Activated CD4-positive, alpha-beta memory T cell treated with anti-CD3 and anti-CD28 coated beads for 36 hours (primary cell): ENCODE measurements at regions of chr12 and their contacts with region 1.

Region 1: GRCh38 chr12:810671-811415 is 58.5 kb downstream of the WNK1 start:
- DNase-seq: peak; percentile 86
- H3K4me3 Mint-ChIP-seq: peak overlapping the region; percentile 8
- H3K27ac Mint-ChIP-seq: peak overlapping the region; percentile 15
- H3K4me1 Mint-ChIP-seq: peaks cover 70% of the 10 kb centered on the region
- H3K27me3 Mint-ChIP-seq: no peaks in the 10 kb centered on the region

Region 2: DNA sequence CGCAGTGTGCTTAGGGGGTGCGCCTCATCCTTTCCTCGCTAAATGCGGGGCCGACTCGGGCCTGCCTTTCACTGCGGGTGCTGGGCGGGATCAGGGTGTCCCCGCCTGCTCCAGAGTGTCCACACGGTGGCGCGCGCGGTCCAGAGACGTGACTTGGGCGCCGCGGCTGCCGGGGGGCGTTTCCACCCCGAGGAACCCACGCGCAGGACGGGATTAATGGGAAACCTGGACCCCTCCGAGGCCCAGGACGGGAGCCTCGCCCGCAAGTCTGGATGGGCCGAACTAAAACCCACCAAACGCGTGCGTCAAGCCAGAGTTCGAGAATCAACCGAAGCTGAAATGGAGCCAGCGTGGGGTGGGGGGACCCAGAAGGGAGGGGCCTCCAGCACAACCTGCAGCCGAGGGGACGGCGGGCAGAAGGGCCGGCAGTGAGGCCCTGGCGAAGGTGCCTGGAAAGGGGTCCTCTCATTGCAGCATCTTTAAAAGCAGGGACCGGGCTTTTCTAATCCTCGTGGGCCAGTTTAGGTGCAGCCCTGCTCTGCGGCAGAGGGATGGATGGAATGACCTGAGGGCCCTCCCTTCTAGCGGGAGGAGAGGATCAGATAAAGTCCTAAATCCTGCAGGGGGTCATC is 240.9 kb before region 1 on chr12:
- CTCF ChIA-PET with region 1: interaction called, 103 read pairs
- POLR2A ChIA-PET with region 1: no interaction called
- intact Hi-C with region 1: loop called (anchors 2 kb)
- DNase-seq: peak; percentile 90
- H3K4me3 Mint-ChIP-seq: peak overlapping the region; percentile 79
- H3K27ac Mint-ChIP-seq: no peak overlapping the region
- H3K4me1 Mint-ChIP-seq: peaks cover 48% of the 10 kb centered on the region
- H3K27me3 Mint-ChIP-seq: no peaks in the 10 kb centered on the region

Region 3: GRCh38 chr12:614411-614970 is 196.4 kb before region 1 on chr12:
- CTCF ChIA-PET with region 1: interaction called, 29 read pairs
- POLR2A ChIA-PET with region 1: no interaction called
- intact Hi-C with region 1: loop called (anchors 2 kb)
- DNase-seq: peak; percentile 59
- H3K4me3 Mint-ChIP-seq: no peak overlapping the region
- H3K27ac Mint-ChIP-seq: no peak overlapping the region
- H3K4me1 Mint-ChIP-seq: peaks cover 18% of the 10 kb centered on the region
- H3K27me3 Mint-ChIP-seq: no peaks in the 10 kb centered on the region

Region 4: GRCh38 chr12:761256-761655 is 49.6 kb before region 1 on chr12:
- CTCF ChIA-PET with region 1: interaction called, 43 read pairs
- POLR2A ChIA-PET with region 1: no interaction called
- intact Hi-C with region 1: no loop called
- DNase-seq: no peak
- H3K4me3 Mint-ChIP-seq: no peak overlapping the region
- H3K27ac Mint-ChIP-seq: peak overlapping the region; percentile 26
- H3K4me1 Mint-ChIP-seq: peaks cover 65% of the 10 kb centered on the region
- H3K27me3 Mint-ChIP-seq: no peaks in the 10 kb centered on the region

Region 5: DNA sequence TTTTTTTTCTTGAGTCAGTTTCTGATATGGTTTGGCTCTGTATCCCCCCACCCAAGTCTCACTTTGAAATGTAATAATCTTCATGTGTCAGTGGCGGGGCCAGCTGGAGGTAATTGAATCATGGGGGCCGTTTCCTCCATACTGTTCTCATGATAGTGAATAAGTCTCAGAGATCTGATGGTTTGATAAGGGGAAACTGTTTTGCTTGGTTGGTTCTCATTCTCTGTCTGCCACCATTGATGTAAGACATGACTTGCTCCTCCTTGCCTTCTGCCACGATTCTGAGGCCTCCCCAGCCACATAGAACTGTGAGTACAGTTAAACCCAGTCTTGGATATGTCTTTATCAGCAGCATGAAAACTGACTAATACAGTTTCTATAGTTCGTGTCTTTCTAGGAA is 15.5 kb before region 1 on chr12:
- CTCF ChIA-PET with region 1: interaction called, 26 read pairs
- POLR2A ChIA-PET with region 1: no interaction called
- intact Hi-C with region 1: loop called (anchors 1 kb)
- DNase-seq: peak; percentile 85
- H3K4me3 Mint-ChIP-seq: peak overlapping the region; percentile 35
- H3K27ac Mint-ChIP-seq: peak overlapping the region; percentile 79
- H3K4me1 Mint-ChIP-seq: peaks cover 81% of the 10 kb centered on the region
- H3K27me3 Mint-ChIP-seq: no peaks in the 10 kb centered on the region

Region 6: GRCh38 chr12:1013618-1014489 is 203.0 kb after region 1 on chr12:
- CTCF ChIA-PET with region 1: no interaction called
- POLR2A ChIA-PET with region 1: no interaction called
- intact Hi-C with region 1: no loop called
- DNase-seq: no peak
- H3K4me3 Mint-ChIP-seq: no peak overlapping the region
- H3K27ac Mint-ChIP-seq: no peak overlapping the region
- H3K4me1 Mint-ChIP-seq: peaks cover 2% of the 10 kb centered on the region
- H3K27me3 Mint-ChIP-seq: no peaks in the 10 kb centered on the region

Region 7: DNA sequence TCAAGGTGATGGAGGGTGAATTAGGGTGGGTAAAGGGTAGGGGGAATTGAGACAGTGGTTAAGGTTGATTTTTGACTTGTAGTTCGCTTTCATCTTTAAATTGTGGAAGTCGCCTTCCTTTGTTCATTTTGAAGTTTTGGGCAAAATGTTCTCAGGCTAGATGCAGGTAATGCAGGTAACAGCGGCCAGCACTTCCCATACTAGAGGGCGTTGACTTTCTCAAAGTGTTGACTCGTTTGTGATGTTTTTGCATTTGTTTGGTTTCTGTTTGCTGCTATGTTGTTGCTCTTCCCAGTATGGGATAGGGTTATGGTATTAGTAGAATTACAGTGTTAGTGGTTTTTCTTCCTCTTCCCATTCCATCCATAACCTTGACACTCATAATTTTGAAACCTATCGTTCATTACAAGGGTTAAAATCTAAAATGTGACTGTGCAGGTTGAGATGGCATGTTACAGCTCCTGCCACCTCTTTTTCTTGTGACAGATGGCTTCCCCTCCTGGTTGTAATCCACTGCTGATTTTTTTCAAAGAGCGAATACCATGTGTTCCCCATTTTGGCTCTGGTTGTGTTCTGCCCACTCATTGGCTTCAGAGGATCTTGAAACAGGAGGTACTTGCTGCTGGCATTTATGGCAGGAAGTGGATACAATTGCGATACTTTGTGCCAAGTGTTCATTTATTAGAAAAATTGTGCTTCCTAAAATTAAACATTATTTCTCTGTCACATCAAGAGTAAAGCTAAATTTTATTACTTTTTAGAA is 237.2 kb after region 1 on chr12:
- CTCF ChIA-PET with region 1: no interaction called
- POLR2A ChIA-PET with region 1: no interaction called
- intact Hi-C with region 1: no loop called
- DNase-seq: no peak
- H3K4me3 Mint-ChIP-seq: no peak overlapping the region
- H3K27ac Mint-ChIP-seq: no peak overlapping the region
- H3K4me1 Mint-ChIP-seq: peaks cover 4% of the 10 kb centered on the region
- H3K27me3 Mint-ChIP-seq: no peaks in the 10 kb centered on the region

Region 8: DNA sequence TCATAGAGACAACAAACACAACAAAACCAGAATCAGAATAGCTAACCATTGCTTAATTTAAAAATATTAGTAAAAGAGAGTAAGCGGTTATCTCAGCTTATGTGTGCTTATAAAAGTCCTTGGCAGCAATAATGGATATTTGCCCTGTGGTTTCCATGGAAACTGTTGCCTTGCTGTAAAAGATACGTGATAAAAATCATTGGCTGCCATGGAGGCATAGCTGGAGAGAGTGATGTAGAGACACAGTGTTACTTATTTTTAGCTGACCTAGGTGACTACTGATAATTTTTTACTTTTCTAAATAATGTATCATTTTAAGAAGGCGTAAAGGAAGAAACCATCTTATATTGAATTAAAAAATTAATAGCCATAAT is 273.0 kb after region 1 on chr12:
- CTCF ChIA-PET with region 1: no interaction called
- POLR2A ChIA-PET with region 1: no interaction called
- intact Hi-C with region 1: no loop called
- DNase-seq: no peak
- H3K4me3 Mint-ChIP-seq: no peak overlapping the region
- H3K27ac Mint-ChIP-seq: no peak overlapping the region
- H3K4me1 Mint-ChIP-seq: peaks cover 16% of the 10 kb centered on the region
- H3K27me3 Mint-ChIP-seq: no peaks in the 10 kb centered on the region

Region 9: DNA sequence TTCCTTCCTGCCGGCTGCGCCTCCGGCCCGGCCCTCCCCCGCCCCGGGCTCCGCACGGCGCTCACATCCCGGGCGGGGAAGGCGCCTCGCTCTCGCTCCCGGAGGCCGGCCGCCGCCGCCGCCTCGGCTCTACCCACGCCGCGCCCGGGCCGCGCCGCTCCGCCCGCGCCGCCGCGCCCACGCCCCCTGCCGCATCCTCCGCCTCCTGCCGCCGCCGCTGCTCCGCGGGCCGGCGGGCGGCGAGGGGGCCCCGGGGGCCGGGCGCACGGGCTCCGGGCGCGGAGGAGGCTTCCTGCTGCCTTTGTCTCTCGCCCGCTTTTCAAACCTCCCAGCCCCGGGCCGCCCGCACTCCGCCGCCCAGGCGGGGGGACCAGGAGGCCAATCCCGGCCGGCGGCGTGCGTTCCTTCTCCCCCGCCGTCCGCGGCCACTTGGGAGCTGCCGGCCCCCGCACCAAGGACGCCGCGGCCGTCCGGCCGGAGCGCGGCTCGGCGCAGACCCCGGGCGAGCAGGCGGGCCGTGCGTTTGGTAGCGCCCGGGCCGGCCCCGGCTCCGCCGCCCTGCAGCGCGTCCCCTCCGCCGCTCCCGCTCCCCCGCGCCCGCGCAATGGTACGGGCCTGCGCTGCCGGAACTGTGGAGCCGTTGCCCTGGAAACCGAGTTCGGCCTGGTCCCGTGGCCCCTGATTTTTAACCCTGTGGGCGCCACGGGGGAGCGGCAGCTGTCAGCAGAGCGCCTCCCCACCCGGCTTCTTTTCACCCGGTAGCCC is 783.6 kb after region 1 on chr12 and contains the start of gene FBXL14:
- CTCF ChIA-PET with region 1: no interaction called
- POLR2A ChIA-PET with region 1: no interaction called
- intact Hi-C with region 1: loop called (anchors 10 kb)
- DNase-seq: peak; percentile 91
- H3K4me3 Mint-ChIP-seq: peak within 1 kb of the TSS; percentile 94
- H3K27ac Mint-ChIP-seq: peak within 1 kb of the TSS; percentile 91
- H3K4me1 Mint-ChIP-seq: peaks cover 31% of the 10 kb centered on the region
- H3K27me3 Mint-ChIP-seq: no peaks in the 10 kb centered on the region
- total RNA-seq, gene FBXL14: 13.5 to 14.4 TPM